ENCODE measurements at regions of chr19 and their contacts with region 1.

Region 1: GRCh38 chr19:13880059-13881043 is 3.4 kb downstream of the NANOS3 start:
- DNase-seq: peak; percentile 98 to 100
- ATAC-seq: peak; percentile 93 to 100 (median 98)
- H3K4me3 ChIP-seq: peak overlapping the region; percentile 11
- H3K4me3 Mint-ChIP-seq: peak overlapping the region; percentile 77
- H3K27ac ChIP-seq: peak overlapping the region; percentile 64
- H3K27ac Mint-ChIP-seq: peak overlapping the region; percentile 75 to 88
- H3K4me1 ChIP-seq: peaks cover 58% of the 10 kb centered on the region
- H3K4me1 Mint-ChIP-seq: peaks cover 18 to 45% of the 10 kb centered on the region in 2 donors
- H3K27me3 ChIP-seq: no peaks in the 10 kb centered on the region
- H3K27me3 Mint-ChIP-seq: no peaks in the 10 kb centered on the region
- CTCF ChIP-seq: peak; percentile 98

Region 2: GRCh38 chr19:13742756-13743155 is 137.6 kb before region 1 on chr19:
- intact Hi-C with region 1: no loop called
- DNase-seq: no peak
- ATAC-seq: no peak
- H3K4me3 ChIP-seq: no peak overlapping the region
- H3K4me3 Mint-ChIP-seq: no peak overlapping the region
- H3K27ac ChIP-seq: no peak overlapping the region
- H3K27ac Mint-ChIP-seq: no peak overlapping the region
- H3K4me1 ChIP-seq: peaks cover 5% of the 10 kb centered on the region
- H3K4me1 Mint-ChIP-seq: peaks cover 0 to 6% of the 10 kb centered on the region in 2 donors
- H3K27me3 ChIP-seq: no peaks in the 10 kb centered on the region
- H3K27me3 Mint-ChIP-seq: no peaks in the 10 kb centered on the region
- CTCF ChIP-seq: no peak

Region 3: GRCh38 chr19:13952154-13953035 is 72.0 kb after region 1 on chr19 and contains the start of gene DCAF15:
- intact Hi-C with region 1: loop called (anchors 10 kb)
- DNase-seq: peak; percentile 98 to 99
- ATAC-seq: peak; percentile 94 to 99 (median 95)
- H3K4me3 ChIP-seq: peak within 1 kb of the TSS; percentile 54
- H3K4me3 Mint-ChIP-seq: peak within 1 kb of the TSS; percentile 98
- H3K27ac ChIP-seq: peak within 1 kb of the TSS; percentile 51
- H3K27ac Mint-ChIP-seq: peak within 1 kb of the TSS; percentile 95 to 97
- H3K4me1 ChIP-seq: peaks cover 24% of the 10 kb centered on the region
- H3K4me1 Mint-ChIP-seq: peaks cover 7 to 27% of the 10 kb centered on the region in 2 donors
- H3K27me3 ChIP-seq: no peaks in the 10 kb centered on the region
- H3K27me3 Mint-ChIP-seq: no peaks in the 10 kb centered on the region
- CTCF ChIP-seq: no peak
- total RNA-seq, gene DCAF15: 121 to 149 (median 124) TPM

Region 4: DNA sequence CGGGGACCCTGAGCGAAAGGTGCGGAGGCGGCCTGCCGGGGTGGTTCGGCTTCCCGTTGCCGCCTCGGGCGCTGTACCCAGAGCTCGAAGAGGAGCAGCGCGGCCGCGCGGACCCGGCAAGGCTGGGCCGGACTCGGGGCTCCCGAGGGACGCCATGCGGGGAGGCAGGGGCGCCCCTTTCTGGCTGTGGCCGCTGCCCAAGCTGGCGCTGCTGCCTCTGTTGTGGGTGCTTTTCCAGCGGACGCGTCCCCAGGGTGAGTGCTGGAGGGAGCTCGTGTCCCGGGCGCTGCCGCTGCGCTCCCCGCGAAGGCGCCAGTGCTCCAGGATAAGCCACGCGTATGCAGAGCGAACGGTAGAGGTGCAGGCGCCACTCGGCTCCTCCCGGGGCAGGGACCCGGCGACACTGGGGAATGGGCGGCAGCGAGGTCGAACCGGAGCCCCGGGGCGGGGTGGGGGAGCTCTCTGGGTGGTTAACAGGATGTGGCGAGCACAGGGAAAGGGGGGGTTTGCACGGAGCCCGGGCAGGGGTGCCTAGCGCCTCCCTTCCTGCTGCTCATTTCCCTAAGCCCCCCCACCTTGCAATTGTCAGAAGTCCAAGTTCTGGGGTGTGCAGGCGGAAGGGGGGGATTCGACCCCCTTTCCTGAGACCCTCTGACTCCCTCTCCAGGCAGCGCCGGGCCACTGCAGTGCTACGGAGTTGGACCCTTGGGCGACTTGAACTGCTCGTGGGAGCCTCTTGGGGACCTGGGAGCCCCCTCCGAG is 151.5 kb after region 1 on chr19 and contains the start of gene IL27RA:
- intact Hi-C with region 1: loop called (anchors 2 kb)
- DNase-seq: peak; percentile 77 to 90
- ATAC-seq: peak; percentile 79 to 90 (median 80)
- H3K4me3 ChIP-seq: peak within 1 kb of the TSS; percentile 96
- H3K4me3 Mint-ChIP-seq: peak within 1 kb of the TSS; percentile 95
- H3K27ac ChIP-seq: peak within 1 kb of the TSS; percentile 99
- H3K27ac Mint-ChIP-seq: peak within 1 kb of the TSS; percentile 92 to 93
- H3K4me1 ChIP-seq: peaks cover 40% of the 10 kb centered on the region
- H3K4me1 Mint-ChIP-seq: peaks cover 23 to 51% of the 10 kb centered on the region in 2 donors
- H3K27me3 ChIP-seq: no peaks in the 10 kb centered on the region
- H3K27me3 Mint-ChIP-seq: no peaks in the 10 kb centered on the region
- CTCF ChIP-seq: peak; percentile 54
- total RNA-seq, gene IL27RA: 38.4 to 61.1 (median 58.0) TPM

Region 5: GRCh38 chr19:14073925-14074838 is 193.8 kb after region 1 on chr19:
- intact Hi-C with region 1: loop called (anchors 1 kb)
- DNase-seq: peak; percentile 34 to 53
- ATAC-seq: peak; percentile 0 to 3 (median 2)
- H3K4me3 ChIP-seq: peak overlapping the region; percentile 61
- H3K4me3 Mint-ChIP-seq: peak overlapping the region; percentile 98
- H3K27ac ChIP-seq: peak overlapping the region; percentile 51
- H3K27ac Mint-ChIP-seq: peak overlapping the region; percentile 86 to 98
- H3K4me1 ChIP-seq: peaks cover 36% of the 10 kb centered on the region
- H3K4me1 Mint-ChIP-seq: peaks cover 15 to 25% of the 10 kb centered on the region in 2 donors
- H3K27me3 ChIP-seq: peaks cover 6% of the 10 kb centered on the region
- H3K27me3 Mint-ChIP-seq: no peaks in the 10 kb centered on the region
- CTCF ChIP-seq: no peak

Region 6: GRCh38 chr19:14136509-14137281 is 256.3 kb after region 1 on chr19 and contains the start of gene ASF1B:
- intact Hi-C with region 1: loop called (anchors 2 kb)
- DNase-seq: peak; percentile 95 to 99
- ATAC-seq: peak; percentile 78 to 91 (median 82)
- H3K4me3 ChIP-seq: peak within 1 kb of the TSS; percentile 86
- H3K4me3 Mint-ChIP-seq: peak within 1 kb of the TSS; percentile 90
- H3K27ac ChIP-seq: peak within 1 kb of the TSS; percentile 95
- H3K27ac Mint-ChIP-seq: peak within 1 kb of the TSS; percentile 88 to 90
- H3K4me1 ChIP-seq: peaks cover 25% of the 10 kb centered on the region
- H3K4me1 Mint-ChIP-seq: peaks cover 27 to 37% of the 10 kb centered on the region in 2 donors
- H3K27me3 ChIP-seq: no peaks in the 10 kb centered on the region
- H3K27me3 Mint-ChIP-seq: no peaks in the 10 kb centered on the region
- CTCF ChIP-seq: peak; percentile 73
- total RNA-seq, gene ASF1B: 4.5 to 5.5 (median 4.8) TPM

Region 7: DNA sequence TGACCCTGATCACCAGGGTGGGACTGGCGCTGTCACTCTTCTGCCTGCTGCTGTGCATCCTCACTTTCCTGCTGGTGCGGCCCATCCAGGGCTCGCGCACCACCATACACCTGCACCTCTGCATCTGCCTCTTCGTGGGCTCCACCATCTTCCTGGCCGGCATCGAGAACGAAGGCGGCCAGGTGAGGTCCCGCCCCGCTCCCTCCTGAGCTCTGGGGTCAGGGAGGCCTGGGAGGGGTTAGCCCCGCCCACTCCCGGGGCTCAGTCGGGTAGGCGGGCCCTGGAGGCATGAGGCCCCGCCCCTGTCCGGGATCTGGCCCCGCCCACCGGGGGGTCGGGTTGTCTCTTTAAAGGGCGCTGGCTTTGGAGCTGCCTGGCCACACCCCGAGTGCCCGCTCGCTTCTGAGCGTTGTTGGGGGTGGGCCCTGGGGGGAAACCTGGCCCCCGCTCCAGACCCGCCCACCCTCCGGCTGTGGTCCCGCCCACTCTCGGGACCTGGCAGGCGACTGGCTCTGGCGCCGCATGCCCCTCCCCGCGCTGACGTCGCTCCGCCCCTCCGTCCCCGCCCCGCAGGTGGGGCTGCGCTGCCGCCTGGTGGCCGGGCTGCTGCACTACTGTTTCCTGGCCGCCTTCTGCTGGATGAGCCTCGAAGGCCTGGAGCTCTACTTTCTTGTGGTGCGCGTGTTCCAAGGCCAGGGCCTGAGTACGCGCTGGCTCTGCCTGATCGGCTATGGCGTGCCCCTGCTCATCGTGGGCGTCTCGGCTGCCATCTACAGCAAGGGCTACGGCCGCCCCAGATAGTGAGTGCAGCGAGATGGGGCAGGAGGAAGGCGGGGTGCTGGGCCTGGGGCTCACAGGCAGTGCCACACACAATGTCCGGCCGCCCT is 525.6 kb after region 1 on chr19:
- intact Hi-C with region 1: loop called (anchors 2 kb)
- DNase-seq: peak; percentile 92 to 94
- ATAC-seq: peak; percentile 64 to 86 (median 71)
- H3K4me3 ChIP-seq: no peak overlapping the region
- H3K4me3 Mint-ChIP-seq: peak overlapping the region; percentile 82
- H3K27ac ChIP-seq: peak overlapping the region; percentile 65
- H3K27ac Mint-ChIP-seq: peak overlapping the region; percentile 92
- H3K4me1 ChIP-seq: peaks cover 59% of the 10 kb centered on the region
- H3K4me1 Mint-ChIP-seq: peaks cover 45 to 71% of the 10 kb centered on the region in 2 donors
- H3K27me3 ChIP-seq: no peaks in the 10 kb centered on the region
- H3K27me3 Mint-ChIP-seq: no peaks in the 10 kb centered on the region
- CTCF ChIP-seq: peak; percentile 98